ENCODE measurements at regions of chr12 and their contacts with region 1.

Region 1: GRCh38 chr12:20369305-20370005 is 1.1 kb downstream of the PDE3A start:
- DNase-seq: peak; percentile 33 to 38
- ATAC-seq: peak; percentile 40 to 46
- H3K4me3 ChIP-seq: peak overlapping the region; percentile 69 to 75 (median 72)
- H3K27ac ChIP-seq: peak overlapping the region; percentile 66 to 84 (median 76)
- H3K4me1 ChIP-seq: peaks cover 0 to 3% of the 10 kb centered on the region in 2 donors
- H3K27me3 ChIP-seq: no peaks in the 10 kb centered on the region
- CTCF ChIP-seq: peak in 2 of 5 experiments; percentile 40 to 43
- POLR2A ChIP-seq: peak; percentile 39 to 55

Region 2: GRCh38 chr12:19915392-19916195 is 453.9 kb before region 1 on chr12:
- in situ Hi-C with region 1: loop called in 1 of 4 experiments (anchors 25 kb)
- intact Hi-C with region 1: no loop called
- DNase-seq: no peak
- ATAC-seq: no peak
- H3K4me3 ChIP-seq: no peak overlapping the region
- H3K27ac ChIP-seq: no peak overlapping the region
- H3K4me1 ChIP-seq: peaks cover 0 to 6% of the 10 kb centered on the region in 2 donors
- H3K27me3 ChIP-seq: no peaks in the 10 kb centered on the region
- CTCF ChIP-seq: peak; percentile 26 to 48 (median 42)
- POLR2A ChIP-seq: no peak

Region 3: GRCh38 chr12:20220339-20220738 is 149.1 kb before region 1 on chr12:
- in situ Hi-C with region 1: no loop called
- intact Hi-C with region 1: no loop called
- DNase-seq: no peak
- ATAC-seq: no peak
- H3K4me3 ChIP-seq: no peak overlapping the region
- H3K27ac ChIP-seq: no peak overlapping the region
- H3K4me1 ChIP-seq: no peaks in the 10 kb centered on the region
- H3K27me3 ChIP-seq: no peaks in the 10 kb centered on the region
- CTCF ChIP-seq: no peak
- POLR2A ChIP-seq: no peak

Region 4: DNA sequence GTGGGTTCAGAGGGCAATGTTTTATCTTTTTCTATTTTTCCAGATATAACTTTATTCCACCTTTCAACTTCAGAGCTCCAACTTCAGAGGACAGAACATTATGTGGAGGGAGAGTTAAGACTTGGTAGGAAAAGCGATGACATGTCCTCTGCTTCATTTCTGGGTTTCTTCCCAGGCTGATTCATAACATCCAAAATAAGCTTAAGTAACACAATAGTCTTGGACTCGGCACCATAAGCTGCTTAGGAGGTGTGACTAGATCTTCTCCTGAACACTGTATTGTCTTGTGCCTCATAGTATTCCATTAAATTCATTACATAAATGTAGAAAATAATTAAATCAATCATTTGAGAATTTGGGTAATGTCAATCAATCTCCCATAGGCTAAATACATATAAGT is 96.7 kb before region 1 on chr12:
- in situ Hi-C with region 1: no loop called
- intact Hi-C with region 1: loop called (anchors 5 kb)
- DNase-seq: peak; percentile 27 to 35
- ATAC-seq: peak; percentile 94 to 96
- H3K4me3 ChIP-seq: no peak overlapping the region
- H3K27ac ChIP-seq: peak overlapping the region; percentile 51 to 84 (median 75)
- H3K4me1 ChIP-seq: peaks cover 20 to 37% of the 10 kb centered on the region in 2 donors
- H3K27me3 ChIP-seq: no peaks in the 10 kb centered on the region
- CTCF ChIP-seq: no peak
- POLR2A ChIP-seq: no peak

Region 5: DNA sequence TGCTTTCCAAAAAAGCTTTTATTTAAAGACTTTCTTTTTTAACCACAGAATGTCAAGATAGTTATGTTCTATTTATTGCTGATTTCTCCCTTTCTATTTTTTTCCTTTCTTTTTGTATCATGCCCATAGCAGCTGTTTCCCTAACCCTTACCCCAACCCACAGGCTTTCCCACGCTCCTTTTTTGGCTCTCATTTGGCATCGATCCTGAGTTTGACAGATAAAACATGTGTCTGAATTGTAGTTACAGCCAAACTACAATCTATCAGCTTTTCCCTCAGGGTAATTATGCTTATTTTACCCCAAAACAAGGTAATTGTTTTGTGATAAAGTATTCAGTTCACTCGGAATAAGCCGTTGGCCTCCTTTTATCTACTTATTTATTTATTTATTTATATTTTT is 45.6 kb after region 1 on chr12:
- in situ Hi-C with region 1: no loop called
- intact Hi-C with region 1: loop called (anchors 5 kb)
- DNase-seq: no peak
- ATAC-seq: peak in 1 of 2 donors; percentile 24
- H3K4me3 ChIP-seq: peak overlapping the region in 3 of 4 donors; percentile 8 to 28 (median 27)
- H3K27ac ChIP-seq: peak overlapping the region in 2 of 4 donors; percentile 10 to 32
- H3K4me1 ChIP-seq: no peaks in the 10 kb centered on the region
- H3K27me3 ChIP-seq: no peaks in the 10 kb centered on the region
- CTCF ChIP-seq: no peak
- POLR2A ChIP-seq: no peak

Measured in gastrocnemius medialis (tissue), 4 donors.